ENCODE measurements at regions of chr7 and their contacts with region 1.

Region 1: DNA sequence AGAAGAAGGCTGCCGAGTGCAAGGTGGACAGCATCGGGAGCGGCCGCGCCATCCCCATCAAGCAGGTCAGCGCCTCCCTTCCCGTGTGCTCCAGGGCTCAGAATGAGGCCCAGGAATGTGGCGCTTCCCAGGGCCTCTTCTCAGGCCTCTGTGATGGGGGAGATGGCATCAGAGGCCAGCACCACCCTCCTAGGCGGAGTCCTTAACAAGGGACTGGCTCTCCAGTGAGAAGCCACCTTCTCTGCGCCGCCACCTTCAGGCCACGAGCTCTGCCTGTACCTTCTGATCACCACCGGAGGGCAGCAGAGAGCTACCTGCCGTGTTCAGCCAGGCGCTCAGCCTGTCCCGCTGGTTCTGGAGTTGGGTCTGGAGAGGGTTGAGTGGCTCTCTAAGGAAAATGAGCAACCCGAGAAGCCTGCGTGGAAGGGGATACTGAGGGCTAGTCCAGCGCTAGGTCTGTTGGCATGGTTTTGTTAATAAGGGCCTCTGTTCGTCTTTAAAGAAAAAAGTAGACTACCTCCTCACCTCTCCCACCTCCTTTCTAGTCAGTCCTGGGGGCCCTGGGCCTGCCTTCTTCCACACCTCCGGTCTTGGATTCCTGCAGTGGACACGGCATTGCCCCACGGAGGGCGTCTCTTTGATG is 37.7 kb downstream of the AGAP3 start:
- DNase-seq: peak; percentile 89
- H3K4me3 Mint-ChIP-seq: no peak overlapping the region
- H3K27ac Mint-ChIP-seq: no peak overlapping the region
- H3K4me1 Mint-ChIP-seq: no peaks in the 10 kb centered on the region
- H3K27me3 Mint-ChIP-seq: no peaks in the 10 kb centered on the region

Region 2: DNA sequence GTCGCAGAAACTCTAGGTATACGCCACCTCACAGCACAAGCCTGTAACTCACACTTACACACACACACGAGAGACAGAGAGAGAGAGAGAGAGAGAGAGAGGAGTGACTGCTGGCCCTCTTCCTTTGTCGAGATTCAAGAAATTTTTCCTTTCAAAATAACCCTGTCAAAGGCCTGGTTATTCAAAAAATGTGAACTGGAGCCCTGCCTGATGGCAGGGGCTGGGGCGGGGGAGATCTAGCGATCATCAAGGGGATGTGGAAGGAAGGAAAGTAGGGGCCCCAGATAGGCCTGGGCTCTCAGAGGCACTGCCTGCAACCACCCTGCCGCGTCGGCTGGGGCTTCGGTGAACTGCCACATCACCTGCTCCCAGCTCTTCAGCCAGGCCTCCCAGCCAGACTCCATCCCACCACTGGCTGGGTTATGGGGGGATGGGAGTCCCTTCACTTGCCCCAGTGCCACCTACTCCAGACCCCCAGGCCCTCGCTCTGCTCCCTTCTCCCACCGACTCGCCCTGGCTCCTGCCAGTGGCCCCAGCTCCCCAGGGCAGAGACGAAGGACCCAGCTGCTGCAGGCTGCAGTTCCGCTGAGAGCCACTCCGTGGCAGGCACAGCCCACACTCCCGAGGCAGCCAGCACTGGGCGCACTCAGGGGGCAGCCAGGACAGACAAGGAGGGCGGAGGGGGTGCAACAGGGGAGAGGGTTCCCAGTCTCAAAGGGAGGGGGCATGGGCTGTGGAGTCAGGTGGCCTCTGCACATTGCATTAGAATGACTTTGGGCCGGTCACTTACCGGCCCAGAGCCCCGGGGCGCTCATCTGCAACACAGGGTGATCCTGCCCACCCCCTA is 161.2 kb before region 1 on chr7:
- CTCF ChIA-PET with region 1: no interaction called
- POLR2A ChIA-PET with region 1: no interaction called
- DNase-seq: peak; percentile 65
- H3K4me3 Mint-ChIP-seq: no peak overlapping the region
- H3K27ac Mint-ChIP-seq: no peak overlapping the region
- H3K4me1 Mint-ChIP-seq: peaks cover 14% of the 10 kb centered on the region
- H3K27me3 Mint-ChIP-seq: peaks cover 27% of the 10 kb centered on the region

Region 3: GRCh38 chr7:151110941-151111645 is 12.8 kb before region 1 on chr7:
- CTCF ChIA-PET with region 1: interaction called, 18 read pairs
- POLR2A ChIA-PET with region 1: no interaction called
- DNase-seq: peak; percentile 79
- H3K4me3 Mint-ChIP-seq: no peak overlapping the region
- H3K27ac Mint-ChIP-seq: no peak overlapping the region
- H3K4me1 Mint-ChIP-seq: peaks cover 4% of the 10 kb centered on the region
- H3K27me3 Mint-ChIP-seq: peaks cover 5% of the 10 kb centered on the region

Region 4: DNA sequence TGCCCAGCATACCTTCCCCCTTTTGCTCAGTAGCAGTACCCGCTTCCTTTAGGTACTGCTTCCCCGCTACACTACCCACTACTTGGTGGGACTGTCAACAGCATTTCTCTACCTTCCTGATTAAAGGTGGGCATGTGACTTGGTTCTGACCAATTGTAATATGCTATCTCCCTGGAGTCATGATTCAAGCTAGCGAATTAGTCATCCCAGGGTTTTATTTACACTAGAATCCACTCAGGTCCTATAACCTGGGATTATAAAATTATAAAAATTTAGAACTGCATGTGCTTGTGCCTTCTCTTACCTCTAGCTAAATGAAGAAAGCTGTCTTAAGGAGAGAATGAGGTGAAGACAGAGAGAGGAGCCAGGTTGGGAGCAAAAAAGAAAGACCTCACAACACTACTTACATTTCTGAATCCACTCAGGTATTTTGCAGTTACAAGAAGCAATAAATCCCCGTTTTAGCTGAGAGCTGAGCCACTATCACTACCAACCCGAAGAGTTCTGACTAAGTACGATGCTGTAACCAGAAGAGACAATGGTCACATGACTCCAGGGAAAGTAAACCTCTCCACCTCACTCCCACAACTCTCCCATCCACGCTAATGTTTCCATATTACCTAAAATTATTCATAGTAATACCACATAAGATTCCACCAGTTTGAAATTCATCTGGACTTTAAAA is 33.8 kb after region 1 on chr7:
- CTCF ChIA-PET with region 1: no interaction called
- POLR2A ChIA-PET with region 1: no interaction called
- DNase-seq: no peak
- H3K4me3 Mint-ChIP-seq: no peak overlapping the region
- H3K27ac Mint-ChIP-seq: no peak overlapping the region
- H3K4me1 Mint-ChIP-seq: no peaks in the 10 kb centered on the region
- H3K27me3 Mint-ChIP-seq: peaks cover 35% of the 10 kb centered on the region

Measured in activated CD4-positive, alpha-beta T cell treated with anti-CD3 and anti-CD28 coated beads, Interleukin-2, amount 10 ng/mL, durations not matched to agents 7 days and 5 days (primary cell).